Psoas muscle (tissue), 8 donors: ENCODE measurements at regions of chr3 and their contacts with region 1.

Region 1: GRCh38 chr3:183502237-183503181 is 53.0 kb downstream of the KLHL6 start:
- DNase-seq: no peak
- ATAC-seq: peak; percentile 74 to 96 (median 89)
- H3K4me3 ChIP-seq: no peak overlapping the region
- H3K27ac ChIP-seq: no peak overlapping the region
- H3K4me1 ChIP-seq: peaks cover 9% of the 10 kb centered on the region
- H3K27me3 ChIP-seq: no peaks in the 10 kb centered on the region
- CTCF ChIP-seq: peak; percentile 52

Region 2: GRCh38 chr3:183158551-183159006 is 343.9 kb before region 1 on chr3:
- intact Hi-C with region 1: no loop called
- DNase-seq: no peak
- ATAC-seq: no peak
- H3K4me3 ChIP-seq: no peak overlapping the region
- H3K27ac ChIP-seq: no peak overlapping the region
- H3K4me1 ChIP-seq: no peaks in the 10 kb centered on the region
- H3K27me3 ChIP-seq: peaks cover 0 to 14% (median 9%) of the 10 kb centered on the region in 3 donors
- CTCF ChIP-seq: no peak

Region 3: DNA sequence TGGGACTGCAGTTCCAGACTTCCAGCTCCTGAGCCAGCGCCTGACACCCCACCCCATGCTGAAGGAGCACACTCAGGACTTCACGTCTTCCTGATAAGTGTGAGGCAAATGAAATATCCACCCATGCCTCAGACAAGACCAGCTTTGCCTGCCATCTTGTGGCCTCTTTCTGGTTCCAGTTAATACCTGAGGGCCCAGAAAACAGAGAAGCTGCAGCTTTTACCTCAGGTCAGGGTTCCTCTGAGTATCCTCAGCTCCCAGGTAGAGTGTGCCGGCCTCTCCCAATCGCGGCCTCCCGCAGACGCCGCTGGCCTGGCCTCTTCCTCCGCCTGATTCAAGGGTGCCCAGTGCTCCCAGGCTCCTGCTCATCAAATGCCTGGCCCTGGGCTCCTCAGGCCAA is 58.1 kb after region 1 on chr3:
- intact Hi-C with region 1: loop called in 1 of 2 experiments (anchors 5 kb)
- DNase-seq: no peak
- ATAC-seq: peak; percentile 26 to 65 (median 61)
- H3K4me3 ChIP-seq: no peak overlapping the region
- H3K27ac ChIP-seq: no peak overlapping the region
- H3K4me1 ChIP-seq: peaks cover 12% of the 10 kb centered on the region
- H3K27me3 ChIP-seq: no peaks in the 10 kb centered on the region
- CTCF ChIP-seq: peak; percentile 43

Region 4: DNA sequence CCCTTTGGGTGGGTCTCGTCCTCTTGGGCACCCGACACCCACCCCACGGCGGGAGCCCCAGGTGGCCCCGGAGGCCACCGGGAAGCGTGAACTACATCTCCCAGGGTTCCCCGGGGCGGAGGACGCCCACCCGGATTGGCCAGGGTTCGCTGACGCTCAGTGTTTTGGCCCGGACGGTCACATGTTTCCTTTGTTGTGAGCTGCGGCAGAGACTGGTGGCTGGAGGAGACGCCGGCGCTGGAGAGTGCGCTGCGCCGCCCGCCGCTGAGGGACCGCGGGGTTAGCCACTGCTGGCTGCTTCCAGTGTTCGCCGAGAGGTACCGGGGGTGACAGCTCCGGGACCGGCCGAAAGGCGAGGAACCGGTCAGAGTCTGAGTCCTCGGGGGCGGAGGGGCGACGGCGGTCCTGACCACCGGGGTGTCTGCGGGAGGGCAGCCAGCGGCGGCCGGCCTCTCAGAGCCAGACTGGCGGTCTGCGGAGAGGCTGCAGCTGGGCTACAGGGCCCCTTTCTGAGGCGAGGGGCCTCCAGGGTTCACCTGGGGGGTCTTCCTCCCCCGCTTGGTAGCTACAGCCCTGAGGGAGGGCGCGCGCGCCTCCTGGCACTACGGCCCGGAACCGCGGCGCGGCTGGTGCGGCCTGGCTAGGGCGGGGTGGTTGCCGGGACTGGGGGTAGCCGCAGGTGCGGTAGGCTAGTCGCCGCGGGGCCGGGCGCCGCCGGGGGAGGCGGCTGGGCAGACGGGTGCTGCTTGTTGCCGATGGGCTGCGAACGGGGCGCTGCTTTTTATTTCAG is 133.1 kb after region 1 on chr3 and contains the start of gene KLHL24:
- intact Hi-C with region 1: loop called in 1 of 2 experiments (anchors 10 kb)
- DNase-seq: peak; percentile 92 to 95
- ATAC-seq: peak; percentile 86 to 89 (median 87)
- H3K4me3 ChIP-seq: peak within 1 kb of the TSS; percentile 99
- H3K27ac ChIP-seq: peak within 1 kb of the TSS; percentile 100
- H3K4me1 ChIP-seq: peaks cover 38% of the 10 kb centered on the region
- H3K27me3 ChIP-seq: no peaks in the 10 kb centered on the region
- CTCF ChIP-seq: peak; percentile 4
- total RNA-seq, gene KLHL24: 77.8 to 162 (median 123) TPM